ENCODE measurements at regions of chr2 and their contacts with region 1.

Region 1: GRCh38 chr2:159118115-159118858 is 149.8 kb downstream of the TANC1 start:
- DNase-seq: peak; percentile 88 to 96 (median 93)
- H3K4me3 ChIP-seq: no peak overlapping the region
- H3K27ac ChIP-seq: no peak overlapping the region
- H3K4me1 ChIP-seq: peaks cover 2 to 16% (median 6%) of the 10 kb centered on the region in 3 donors
- H3K27me3 ChIP-seq: no peaks in the 10 kb centered on the region
- CTCF ChIP-seq: peak; percentile 96

Region 2: DNA sequence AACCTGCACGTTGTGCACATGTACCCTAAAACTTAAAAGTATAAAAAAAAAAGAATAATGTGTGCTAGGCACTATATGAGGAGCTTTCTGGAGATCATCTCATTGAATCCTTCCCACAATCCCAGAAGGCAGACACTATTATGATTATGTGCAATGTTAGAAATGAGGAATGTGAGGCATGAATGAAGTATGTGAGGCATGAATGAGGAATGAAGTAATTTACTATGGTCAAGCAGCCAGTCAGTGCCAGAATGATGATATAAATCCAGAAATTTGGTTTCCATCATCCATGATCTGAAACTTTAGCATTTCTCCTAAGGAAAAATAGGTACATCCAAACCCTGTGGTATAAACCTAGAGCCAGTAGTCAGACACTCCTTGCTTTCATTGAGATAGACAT is 703.7 kb before region 1 on chr2:
- intact Hi-C with region 1: no loop called
- DNase-seq: no peak
- H3K4me3 ChIP-seq: no peak overlapping the region
- H3K27ac ChIP-seq: no peak overlapping the region
- H3K4me1 ChIP-seq: no peaks in the 10 kb centered on the region
- H3K27me3 ChIP-seq: no peaks in the 10 kb centered on the region
- CTCF ChIP-seq: no peak

Region 3: GRCh38 chr2:158903711-158904443 is 214.4 kb before region 1 on chr2:
- intact Hi-C with region 1: loop called (anchors 10 kb)
- DNase-seq: no peak
- H3K4me3 ChIP-seq: no peak overlapping the region
- H3K27ac ChIP-seq: no peak overlapping the region
- H3K4me1 ChIP-seq: no peaks in the 10 kb centered on the region
- H3K27me3 ChIP-seq: no peaks in the 10 kb centered on the region
- CTCF ChIP-seq: no peak

Region 4: GRCh38 chr2:159445307-159445706 is 327.0 kb after region 1 on chr2:
- intact Hi-C with region 1: no loop called
- DNase-seq: no peak
- H3K4me3 ChIP-seq: no peak overlapping the region
- H3K27ac ChIP-seq: no peak overlapping the region
- H3K4me1 ChIP-seq: no peaks in the 10 kb centered on the region
- H3K27me3 ChIP-seq: no peaks in the 10 kb centered on the region
- CTCF ChIP-seq: no peak